ENCODE measurements at regions of chr12 and their contacts with region 1.

Region 1: GRCh38 chr12:125402874-125403789 is 337.9 kb downstream of the AACS start:
- DNase-seq: peak; percentile 45
- H3K4me3 Mint-ChIP-seq: no peak overlapping the region
- H3K27ac Mint-ChIP-seq: no peak overlapping the region
- H3K4me1 Mint-ChIP-seq: no peaks in the 10 kb centered on the region
- H3K27me3 Mint-ChIP-seq: peaks cover 56% of the 10 kb centered on the region
- CTCF ChIP-seq: peak; percentile 47

Region 2: DNA sequence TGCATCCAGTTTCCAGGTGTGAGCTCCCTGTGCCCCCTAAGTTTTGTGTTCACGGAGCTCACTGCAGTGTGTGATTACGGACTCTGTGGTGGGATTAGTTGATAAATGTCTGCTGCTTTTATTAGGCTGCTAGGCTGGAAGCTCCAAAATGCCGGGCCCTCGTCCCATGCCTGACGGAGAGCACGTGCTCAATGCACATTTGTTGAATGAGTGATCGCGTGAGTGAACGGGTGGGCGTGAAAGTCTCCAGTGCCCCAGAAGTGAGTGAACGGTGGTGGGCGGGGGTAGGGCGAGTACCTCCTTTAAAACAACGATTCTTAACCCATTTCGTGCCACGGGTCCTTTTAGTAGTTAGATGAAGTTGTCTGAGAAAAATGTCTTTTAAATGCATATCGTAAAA is 162.4 kb before region 1 on chr12:
- CTCF ChIA-PET with region 1: interaction called, 3 read pairs
- POLR2A ChIA-PET with region 1: no interaction called
- intact Hi-C with region 1: loop called (anchors 1 kb)
- DNase-seq: no peak
- H3K4me3 Mint-ChIP-seq: no peak overlapping the region
- H3K27ac Mint-ChIP-seq: no peak overlapping the region
- H3K4me1 Mint-ChIP-seq: no peaks in the 10 kb centered on the region
- H3K27me3 Mint-ChIP-seq: peaks cover 45% of the 10 kb centered on the region
- CTCF ChIP-seq: no peak

Region 3: GRCh38 chr12:125389061-125389697 is 14.0 kb before region 1 on chr12:
- CTCF ChIA-PET with region 1: interaction called, 19 read pairs
- POLR2A ChIA-PET with region 1: no interaction called
- intact Hi-C with region 1: no loop called
- DNase-seq: no peak
- H3K4me3 Mint-ChIP-seq: no peak overlapping the region
- H3K27ac Mint-ChIP-seq: no peak overlapping the region
- H3K4me1 Mint-ChIP-seq: no peaks in the 10 kb centered on the region
- H3K27me3 Mint-ChIP-seq: peaks cover 11% of the 10 kb centered on the region
- CTCF ChIP-seq: no peak